Mammary epithelial cell (primary cell): ENCODE measurements at regions of chr20 and their contacts with region 1.

Region 1: GRCh38 chr20:58179432-58180099 is 48.9 kb downstream of the ANKRD60 start:
- DNase-seq: peak; percentile 25
- H3K4me3 ChIP-seq: peak overlapping the region in 2 of 3 experiments; percentile 37 to 40
- H3K27ac ChIP-seq: no peak overlapping the region
- H3K4me1 ChIP-seq: peaks cover 11% of the 10 kb centered on the region
- H3K27me3 ChIP-seq: no peaks in the 10 kb centered on the region
- CTCF ChIP-seq: peak; percentile 66 to 92

Region 2: GRCh38 chr20:57596998-57597939 is 582.3 kb before region 1 on chr20:
- CTCF ChIA-PET with region 1: no interaction called
- dilution Hi-C with region 1: loop called (anchors 25 kb)
- in situ Hi-C with region 1: no loop called
- intact Hi-C with region 1: loop called (anchors 1 kb)
- DNase-seq: peak; percentile 24
- H3K4me3 ChIP-seq: no peak overlapping the region
- H3K27ac ChIP-seq: no peak overlapping the region
- H3K4me1 ChIP-seq: peaks cover 9% of the 10 kb centered on the region
- H3K27me3 ChIP-seq: no peaks in the 10 kb centered on the region
- CTCF ChIP-seq: peak; percentile 62 to 87

Region 3: GRCh38 chr20:57654363-57654997 is 525.1 kb before region 1 on chr20:
- CTCF ChIA-PET with region 1: no interaction called
- dilution Hi-C with region 1: no loop called
- in situ Hi-C with region 1: no loop called
- intact Hi-C with region 1: loop called (anchors 1 kb)
- DNase-seq: peak; percentile 38
- H3K4me3 ChIP-seq: no peak overlapping the region
- H3K27ac ChIP-seq: no peak overlapping the region
- H3K4me1 ChIP-seq: peaks cover 26% of the 10 kb centered on the region
- H3K27me3 ChIP-seq: no peaks in the 10 kb centered on the region
- CTCF ChIP-seq: peak; percentile 81 to 85

Region 4: DNA sequence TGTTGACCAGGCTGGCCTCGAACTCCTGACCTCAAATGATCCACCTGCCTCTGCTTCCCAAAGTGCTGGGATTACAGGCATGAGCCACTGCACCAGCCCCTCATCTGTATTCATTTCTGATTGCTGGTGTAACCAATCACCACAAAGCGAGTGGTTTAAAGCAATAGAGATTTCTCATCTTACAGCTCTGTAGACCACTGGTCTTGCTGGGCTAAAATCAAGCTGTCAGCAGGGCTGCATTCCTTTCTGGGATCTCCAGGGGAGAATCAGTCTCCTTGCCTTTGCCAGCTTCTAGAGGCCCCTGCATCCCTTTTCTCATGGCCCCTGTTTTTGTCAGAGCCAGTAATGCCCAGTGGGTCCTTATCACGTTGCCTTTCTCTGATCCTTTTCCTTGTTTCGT is 419.8 kb before region 1 on chr20:
- CTCF ChIA-PET with region 1: no interaction called
- dilution Hi-C with region 1: no loop called
- in situ Hi-C with region 1: no loop called
- intact Hi-C with region 1: no loop called
- DNase-seq: no peak
- H3K4me3 ChIP-seq: no peak overlapping the region
- H3K27ac ChIP-seq: no peak overlapping the region
- H3K4me1 ChIP-seq: peaks cover 2% of the 10 kb centered on the region
- H3K27me3 ChIP-seq: peaks cover 2% of the 10 kb centered on the region
- CTCF ChIP-seq: no peak

Region 5: DNA sequence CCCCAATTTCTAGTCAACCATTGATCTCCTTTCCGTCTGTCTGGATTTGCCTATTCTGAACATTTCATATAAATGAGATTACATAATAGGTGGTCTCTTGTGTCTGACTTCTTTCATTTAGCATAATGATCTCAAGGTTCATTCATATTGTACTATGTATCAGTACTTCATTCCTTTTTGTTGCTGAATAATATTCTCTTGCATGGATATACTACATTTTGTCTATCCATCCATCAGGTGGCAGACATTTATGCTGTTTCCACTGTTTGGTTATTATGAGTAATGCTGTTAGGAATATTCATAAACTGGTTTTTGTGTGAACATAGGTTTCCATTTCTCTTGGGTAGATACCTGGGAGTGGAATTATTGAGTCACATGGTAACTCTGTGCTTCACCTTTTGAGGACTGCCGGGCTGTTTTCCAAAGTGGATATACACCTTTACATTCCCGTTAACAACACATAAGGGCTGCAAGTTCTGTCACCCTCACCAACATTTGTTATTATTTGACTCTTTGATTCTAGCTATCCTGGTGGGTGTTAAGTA is 321.5 kb before region 1 on chr20:
- CTCF ChIA-PET with region 1: no interaction called
- dilution Hi-C with region 1: no loop called
- in situ Hi-C with region 1: no loop called
- intact Hi-C with region 1: loop called (anchors 1 kb)
- DNase-seq: peak; percentile 35
- H3K4me3 ChIP-seq: no peak overlapping the region
- H3K27ac ChIP-seq: no peak overlapping the region
- H3K4me1 ChIP-seq: no peaks in the 10 kb centered on the region
- H3K27me3 ChIP-seq: no peaks in the 10 kb centered on the region
- CTCF ChIP-seq: no peak

Region 6: DNA sequence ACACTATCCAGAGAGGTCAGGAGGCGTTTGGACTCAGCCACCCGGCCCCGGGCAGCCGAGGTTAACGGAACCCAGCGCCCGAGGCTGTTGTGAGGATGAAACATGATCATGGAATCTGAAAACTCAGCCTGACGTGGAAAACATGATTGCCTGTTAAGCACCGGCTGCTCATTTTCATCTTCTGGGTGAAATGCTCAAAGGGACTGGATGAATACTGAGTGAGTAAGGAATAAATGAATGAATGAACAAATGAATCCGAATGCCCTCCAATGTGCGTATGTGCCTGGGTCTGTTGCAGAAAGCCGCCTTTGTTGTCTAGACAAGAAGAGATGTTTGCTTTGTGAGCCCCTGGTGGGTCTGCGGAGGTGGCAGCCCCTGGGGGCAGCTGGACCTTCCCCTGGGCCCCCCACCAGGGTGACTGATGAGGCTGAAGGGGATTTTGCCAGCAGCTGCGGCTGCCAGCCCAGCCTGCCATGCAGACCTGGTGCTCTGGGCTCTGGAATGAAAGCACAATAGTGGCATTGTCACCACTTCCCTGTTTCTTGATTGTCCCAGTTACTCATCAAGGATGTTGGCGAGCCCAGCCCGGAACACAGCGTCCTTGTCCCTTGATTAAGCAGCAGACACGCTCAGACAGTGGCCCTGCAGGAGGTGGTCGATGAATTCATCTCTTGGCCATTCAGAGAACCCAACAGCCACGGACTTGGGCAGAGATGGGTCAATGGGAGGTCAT is 162.2 kb before region 1 on chr20:
- CTCF ChIA-PET with region 1: no interaction called
- dilution Hi-C with region 1: no loop called
- in situ Hi-C with region 1: no loop called
- intact Hi-C with region 1: no loop called
- DNase-seq: peak; percentile 95
- H3K4me3 ChIP-seq: peak overlapping the region in 1 of 3 experiments; percentile 2
- H3K27ac ChIP-seq: peak overlapping the region; percentile 91
- H3K4me1 ChIP-seq: peaks cover 42% of the 10 kb centered on the region
- H3K27me3 ChIP-seq: no peaks in the 10 kb centered on the region
- CTCF ChIP-seq: no peak

Region 7: DNA sequence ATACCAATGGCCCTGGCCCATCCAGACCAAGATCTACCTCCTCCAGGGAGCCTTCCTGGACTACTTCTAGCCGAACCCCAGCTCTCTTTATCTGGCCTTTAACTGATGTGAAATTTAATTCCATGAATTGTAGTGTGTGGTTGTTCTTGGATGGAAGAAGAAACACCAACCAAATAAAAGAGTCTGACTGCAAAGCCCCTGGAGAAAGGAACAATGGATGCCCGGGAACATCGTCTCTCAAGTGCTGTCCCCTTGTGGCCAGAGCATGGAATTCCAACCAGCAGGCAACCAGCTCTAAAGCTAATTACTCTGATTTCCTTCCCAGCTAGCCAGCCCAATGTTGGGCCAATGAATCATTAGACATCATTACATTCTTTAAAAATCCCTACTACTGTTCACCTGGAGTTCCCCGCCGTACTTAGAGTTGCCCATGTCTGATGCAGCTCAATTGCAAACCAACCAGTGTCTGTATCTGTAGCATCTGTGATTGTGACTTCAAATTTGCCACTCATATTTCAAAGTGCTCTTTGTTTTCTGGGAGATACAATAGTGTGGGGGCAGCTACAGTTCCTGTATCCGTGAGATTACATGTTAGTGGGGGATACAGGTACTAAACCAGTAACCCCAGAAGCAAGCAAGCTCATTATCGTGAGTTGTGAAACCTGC is 92.2 kb before region 1 on chr20:
- CTCF ChIA-PET with region 1: no interaction called
- dilution Hi-C with region 1: no loop called
- in situ Hi-C with region 1: no loop called
- intact Hi-C with region 1: loop called (anchors 1 kb)
- DNase-seq: peak; percentile 76
- H3K4me3 ChIP-seq: no peak overlapping the region
- H3K27ac ChIP-seq: no peak overlapping the region
- H3K4me1 ChIP-seq: peaks cover 15% of the 10 kb centered on the region
- H3K27me3 ChIP-seq: no peaks in the 10 kb centered on the region
- CTCF ChIP-seq: peak; percentile 96 to 99

Region 8: DNA sequence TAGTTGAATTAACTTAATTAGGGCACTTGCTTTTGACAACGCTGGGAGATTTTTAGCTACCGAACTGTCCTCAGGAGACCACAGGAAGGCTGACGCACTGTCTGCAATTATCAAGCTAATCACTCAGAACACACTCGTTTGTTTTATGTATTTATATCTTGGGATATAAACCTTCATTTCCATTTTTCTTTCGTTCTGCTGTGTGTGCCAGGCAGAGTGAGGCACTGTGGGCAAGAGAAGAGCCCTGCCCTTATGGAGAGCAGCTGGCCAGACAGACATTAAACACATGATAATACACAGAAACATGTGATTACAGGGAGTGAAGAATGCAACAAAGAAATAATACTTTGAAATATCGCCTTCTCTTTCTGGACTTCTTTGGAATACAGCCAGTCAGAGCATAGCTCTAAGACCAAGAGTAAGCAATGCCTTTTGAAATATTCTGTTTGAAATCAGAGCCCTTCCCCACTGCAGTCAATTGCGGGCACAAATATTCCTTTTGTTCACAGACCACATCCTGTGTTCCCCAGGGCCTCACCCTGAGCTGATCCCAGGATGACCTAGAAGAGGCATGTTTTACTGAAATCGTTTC is 47.9 kb before region 1 on chr20:
- CTCF ChIA-PET with region 1: no interaction called
- dilution Hi-C with region 1: loop called (anchors 5 kb)
- in situ Hi-C with region 1: no loop called
- intact Hi-C with region 1: no loop called
- DNase-seq: peak; percentile 87
- H3K4me3 ChIP-seq: no peak overlapping the region
- H3K27ac ChIP-seq: peak overlapping the region; percentile 90
- H3K4me1 ChIP-seq: peaks cover 64% of the 10 kb centered on the region
- H3K27me3 ChIP-seq: no peaks in the 10 kb centered on the region
- CTCF ChIP-seq: no peak